Activated CD8-positive, alpha-beta T cell treated with anti-CD3 and anti-CD28 coated beads for 36 hours (primary cell): ENCODE measurements at regions of chr2 and their contacts with region 1.

Region 1: DNA sequence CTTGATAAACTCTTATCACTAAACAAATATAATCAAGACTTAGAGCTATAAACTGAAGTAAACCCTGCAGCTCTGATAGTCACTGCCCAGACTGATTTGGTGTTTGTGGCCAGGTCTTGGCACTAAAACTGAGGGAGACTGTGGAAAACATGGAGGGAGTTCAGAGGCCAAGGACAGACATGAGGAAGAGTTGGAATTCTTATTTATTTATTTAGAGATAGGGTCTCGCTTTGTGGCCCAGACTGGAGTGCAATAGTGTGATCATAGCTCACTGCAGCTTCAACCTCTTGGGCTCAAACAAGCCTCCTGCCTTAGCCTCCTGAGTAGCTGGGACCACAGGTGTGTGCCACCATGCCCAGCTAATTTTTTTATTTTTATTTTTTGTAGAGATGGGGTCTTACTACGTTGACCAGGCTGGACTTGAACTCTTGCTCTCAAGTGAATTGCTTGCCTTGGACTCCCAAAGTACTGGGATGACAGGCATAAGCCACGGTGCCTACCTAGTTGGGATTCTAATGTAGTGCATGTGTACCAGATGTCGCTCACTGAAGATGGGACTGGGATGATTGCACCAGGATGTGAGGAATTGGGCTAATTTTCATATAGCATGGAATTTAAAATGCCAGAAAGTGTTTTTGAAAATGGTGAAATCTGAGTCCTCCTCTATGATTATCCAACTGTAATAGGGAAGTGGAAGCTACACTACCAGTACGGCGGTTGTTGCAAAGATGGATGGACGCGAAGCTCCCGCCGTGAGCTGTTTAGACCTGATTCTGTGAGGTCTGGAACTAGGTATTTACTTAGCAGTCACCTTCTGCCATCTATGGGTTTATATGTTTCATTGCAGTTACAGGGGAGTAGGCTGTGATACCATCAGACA is 52.7 kb upstream of the CTLA4 start:
- DNase-seq: peak; percentile 73
- ATAC-seq: peak; percentile 83
- H3K4me3 Mint-ChIP-seq: peak overlapping the region; percentile 34
- H3K27ac Mint-ChIP-seq: peak overlapping the region; percentile 51
- H3K4me1 Mint-ChIP-seq: peaks cover 59% of the 10 kb centered on the region
- H3K27me3 Mint-ChIP-seq: peaks cover 2% of the 10 kb centered on the region
- CTCF ChIP-seq: peak; percentile 72

Region 2: DNA sequence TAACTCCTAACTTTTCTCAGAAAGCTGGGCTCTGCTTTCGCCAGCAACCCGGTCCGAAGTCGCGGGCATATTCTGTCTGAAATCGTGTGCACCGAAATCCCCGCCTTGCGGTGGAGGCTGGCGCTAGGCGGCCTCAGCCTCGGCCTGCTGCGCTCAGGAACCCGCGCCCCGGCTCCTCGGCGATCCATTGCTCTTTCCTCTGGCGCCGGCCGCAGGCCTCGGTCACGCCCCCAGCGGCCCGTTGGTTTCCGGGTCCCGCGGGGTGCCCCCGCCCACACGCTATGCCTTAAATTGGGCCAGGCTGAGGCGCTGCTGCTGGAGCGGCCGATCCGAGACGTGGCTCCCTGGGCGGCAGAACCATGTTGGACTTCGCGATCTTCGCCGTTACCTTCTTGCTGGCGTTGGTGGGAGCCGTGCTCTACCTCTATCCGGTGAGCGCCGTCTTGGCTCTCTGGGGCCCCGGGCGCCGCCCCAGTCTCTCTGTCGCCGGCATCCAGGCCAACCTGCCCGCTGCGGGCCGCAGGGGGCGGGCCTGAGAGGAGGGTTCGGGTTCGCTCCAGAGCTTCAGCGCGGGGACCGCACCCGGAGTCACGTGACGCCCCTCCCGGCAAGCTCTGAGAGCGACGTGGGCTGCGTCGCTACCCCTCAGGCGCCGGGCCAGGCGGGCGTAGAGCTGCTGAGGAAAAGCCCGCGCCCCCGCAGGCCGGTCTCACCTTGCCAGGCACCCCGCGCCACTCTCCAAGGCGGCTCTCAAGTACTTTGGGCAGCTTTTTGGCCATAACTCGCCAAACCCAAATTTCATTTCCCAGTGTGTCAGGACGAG is 576.0 kb before region 1 on chr2 and contains the start of gene CYP20A1:
- CTCF ChIA-PET with region 1: no interaction called
- POLR2A ChIA-PET with region 1: no interaction called
- intact Hi-C with region 1: loop called (anchors 10 kb)
- DNase-seq: peak; percentile 98
- ATAC-seq: peak; percentile 83
- H3K4me3 Mint-ChIP-seq: peak within 1 kb of the TSS; percentile 83
- H3K27ac Mint-ChIP-seq: peak within 1 kb of the TSS; percentile 98
- H3K4me1 Mint-ChIP-seq: peaks cover 30% of the 10 kb centered on the region
- H3K27me3 Mint-ChIP-seq: no peaks in the 10 kb centered on the region
- CTCF ChIP-seq: peak; percentile 17
- total RNA-seq, gene CYP20A1: 13.8 to 14.3 TPM

Region 3: DNA sequence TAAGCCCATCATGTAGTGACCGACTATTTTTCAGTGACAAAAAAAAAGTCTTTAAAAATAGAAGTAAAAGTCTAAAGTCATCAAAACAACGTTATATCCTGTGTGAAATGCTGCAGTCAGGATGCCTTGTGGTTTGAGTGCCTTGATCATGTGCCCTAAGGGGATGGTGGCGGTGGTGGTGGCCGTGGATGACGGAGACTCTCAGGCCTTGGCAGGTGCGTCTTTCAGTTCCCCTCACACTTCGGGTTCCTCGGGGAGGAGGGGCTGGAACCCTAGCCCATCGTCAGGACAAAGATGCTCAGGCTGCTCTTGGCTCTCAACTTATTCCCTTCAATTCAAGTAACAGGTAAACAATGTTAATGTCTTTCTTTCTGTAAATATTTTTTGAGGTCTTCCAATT is 108.5 kb before region 1 on chr2 and contains the start of gene CD28:
- CTCF ChIA-PET with region 1: interaction called, 40 read pairs
- POLR2A ChIA-PET with region 1: interaction called, 53 read pairs
- intact Hi-C with region 1: no loop called
- DNase-seq: peak; percentile 97
- ATAC-seq: peak; percentile 75
- H3K4me3 Mint-ChIP-seq: peak within 1 kb of the TSS; percentile 92
- H3K27ac Mint-ChIP-seq: peak within 1 kb of the TSS; percentile 97
- H3K4me1 Mint-ChIP-seq: peaks cover 42% of the 10 kb centered on the region
- H3K27me3 Mint-ChIP-seq: no peaks in the 10 kb centered on the region
- CTCF ChIP-seq: no peak
- total RNA-seq, gene CD28: 94.2 to 97.3 TPM

Region 4: GRCh38 chr2:203740780-203741281 is 74.1 kb before region 1 on chr2:
- CTCF ChIA-PET with region 1: interaction called, 11 read pairs
- POLR2A ChIA-PET with region 1: interaction called, 30 read pairs
- intact Hi-C with region 1: no loop called
- DNase-seq: peak; percentile 66
- ATAC-seq: peak; percentile 64
- H3K4me3 Mint-ChIP-seq: peak overlapping the region; percentile 54
- H3K27ac Mint-ChIP-seq: peak overlapping the region; percentile 99
- H3K4me1 Mint-ChIP-seq: peaks cover 88% of the 10 kb centered on the region
- H3K27me3 Mint-ChIP-seq: no peaks in the 10 kb centered on the region
- CTCF ChIP-seq: no peak

Region 5: DNA sequence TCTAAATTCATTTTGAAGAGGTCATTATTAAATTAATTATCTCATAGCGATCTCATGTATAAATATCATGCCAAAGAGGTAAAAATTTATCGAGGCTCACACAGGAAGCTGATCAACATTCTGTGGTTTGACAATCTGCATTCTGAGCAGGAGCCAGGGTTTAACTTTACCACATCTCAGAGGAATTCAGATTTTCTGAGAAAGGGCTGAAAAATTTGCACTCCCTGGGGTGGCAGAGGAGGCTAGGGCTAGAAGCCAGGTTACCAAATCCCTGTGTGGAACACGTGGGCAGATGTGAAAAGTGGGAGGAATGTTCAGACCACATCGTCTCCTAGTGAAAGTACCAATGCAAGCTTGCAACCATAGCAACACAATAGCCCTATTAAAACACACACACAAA is 10.8 kb before region 1 on chr2:
- CTCF ChIA-PET with region 1: interaction called, 28 read pairs
- POLR2A ChIA-PET with region 1: interaction called, 4 read pairs
- intact Hi-C with region 1: no loop called
- DNase-seq: peak; percentile 72
- ATAC-seq: peak; percentile 47
- H3K4me3 Mint-ChIP-seq: no peak overlapping the region
- H3K27ac Mint-ChIP-seq: peak overlapping the region; percentile 88
- H3K4me1 Mint-ChIP-seq: peaks cover 87% of the 10 kb centered on the region
- H3K27me3 Mint-ChIP-seq: no peaks in the 10 kb centered on the region
- CTCF ChIP-seq: no peak

Region 6: DNA sequence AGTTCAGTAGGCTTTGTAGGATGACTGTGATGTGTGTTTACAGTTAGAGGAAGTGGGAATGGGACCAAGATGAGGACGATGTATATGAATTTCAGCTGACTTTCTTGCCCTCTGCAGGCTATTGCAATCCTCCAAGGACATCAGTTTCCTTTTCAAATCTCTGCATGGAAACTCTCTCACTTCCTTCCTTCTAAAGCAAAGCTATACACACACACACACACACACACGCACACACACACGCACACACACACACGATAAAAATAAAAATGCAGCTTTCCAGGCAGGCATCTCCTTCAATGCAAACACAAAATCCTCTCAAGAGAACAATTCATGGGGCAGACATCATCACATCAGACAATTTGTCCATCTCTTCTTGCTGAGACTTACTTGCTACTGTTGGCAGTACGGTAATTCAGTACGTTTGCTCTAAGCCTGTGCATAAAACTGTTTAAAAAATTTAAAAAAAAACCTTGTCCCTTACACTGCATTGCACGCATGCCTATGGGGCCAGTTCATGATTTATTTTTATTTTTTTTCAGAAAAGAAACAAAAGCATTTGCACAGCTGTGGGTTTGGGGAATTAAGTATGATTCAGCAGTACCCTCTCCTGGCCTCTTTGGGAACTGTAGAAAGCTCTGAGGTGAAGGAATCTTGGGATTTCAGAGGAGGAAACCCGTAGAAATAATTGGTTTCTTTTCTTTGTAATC is 94.5 kb after region 1 on chr2:
- CTCF ChIA-PET with region 1: interaction called, 48 read pairs
- POLR2A ChIA-PET with region 1: interaction called, 3 read pairs
- intact Hi-C with region 1: loop called (anchors 5 kb)
- DNase-seq: peak; percentile 32
- ATAC-seq: peak; percentile 83
- H3K4me3 Mint-ChIP-seq: no peak overlapping the region
- H3K27ac Mint-ChIP-seq: peak overlapping the region; percentile 11
- H3K4me1 Mint-ChIP-seq: peaks cover 26% of the 10 kb centered on the region
- H3K27me3 Mint-ChIP-seq: peaks cover 5% of the 10 kb centered on the region
- CTCF ChIP-seq: peak; percentile 96